ENCODE measurements at regions of chr1 and their contacts with region 1.

Region 1: DNA sequence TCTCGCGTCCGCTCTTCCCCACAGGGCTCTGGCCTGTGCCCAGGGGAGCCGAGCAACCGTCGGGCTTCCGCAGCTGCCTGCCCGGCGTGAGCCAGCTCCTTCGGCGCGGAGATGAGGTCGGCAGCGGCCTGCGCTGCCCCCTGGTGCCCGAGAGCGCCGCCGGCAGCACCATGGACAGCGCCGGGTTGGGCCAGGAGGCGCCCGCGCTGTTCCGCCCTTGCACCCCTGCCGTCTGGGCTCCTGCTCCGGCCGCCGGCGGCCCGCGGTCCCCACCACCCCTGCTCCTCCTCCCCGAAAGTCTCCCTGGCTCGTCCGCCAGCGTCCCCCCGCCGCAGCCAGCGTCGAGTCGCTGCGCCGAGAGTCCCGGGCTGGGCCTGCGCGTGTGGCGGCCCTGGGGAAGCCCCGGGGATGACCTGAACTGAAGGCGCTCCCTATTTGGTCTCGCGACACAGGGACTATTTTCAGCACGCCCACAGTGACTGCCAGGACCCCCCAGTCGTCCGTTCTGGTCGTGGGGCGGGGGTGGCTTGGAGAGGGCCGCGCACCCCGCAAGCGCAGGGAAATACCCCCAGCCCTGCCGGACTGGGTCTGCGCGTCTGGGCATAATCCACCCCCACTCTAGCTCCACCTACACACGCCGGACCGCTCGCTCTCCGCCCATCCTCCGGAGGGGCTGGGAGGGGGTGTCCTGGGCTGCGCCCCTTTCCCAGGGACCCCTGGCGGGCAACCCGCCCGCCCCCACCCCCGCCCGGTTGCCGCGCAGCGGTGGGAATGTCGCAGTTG is 1.3 kb downstream of the HES3 start:
- DNase-seq: peak in 38 of 42 donors; percentile 26 to 86 (median 67)

Region 2: GRCh38 chr1:6052543-6053205 is 192.6 kb before region 1 on chr1:
- intact Hi-C with region 1: loop called (anchors 5 kb)
- DNase-seq: peak in 31 of 42 donors; percentile 32 to 85 (median 59)

Region 3: GRCh38 chr1:6116137-6116536 is 129.1 kb before region 1 on chr1:
- intact Hi-C with region 1: no loop called
- DNase-seq: no peak

Region 4: DNA sequence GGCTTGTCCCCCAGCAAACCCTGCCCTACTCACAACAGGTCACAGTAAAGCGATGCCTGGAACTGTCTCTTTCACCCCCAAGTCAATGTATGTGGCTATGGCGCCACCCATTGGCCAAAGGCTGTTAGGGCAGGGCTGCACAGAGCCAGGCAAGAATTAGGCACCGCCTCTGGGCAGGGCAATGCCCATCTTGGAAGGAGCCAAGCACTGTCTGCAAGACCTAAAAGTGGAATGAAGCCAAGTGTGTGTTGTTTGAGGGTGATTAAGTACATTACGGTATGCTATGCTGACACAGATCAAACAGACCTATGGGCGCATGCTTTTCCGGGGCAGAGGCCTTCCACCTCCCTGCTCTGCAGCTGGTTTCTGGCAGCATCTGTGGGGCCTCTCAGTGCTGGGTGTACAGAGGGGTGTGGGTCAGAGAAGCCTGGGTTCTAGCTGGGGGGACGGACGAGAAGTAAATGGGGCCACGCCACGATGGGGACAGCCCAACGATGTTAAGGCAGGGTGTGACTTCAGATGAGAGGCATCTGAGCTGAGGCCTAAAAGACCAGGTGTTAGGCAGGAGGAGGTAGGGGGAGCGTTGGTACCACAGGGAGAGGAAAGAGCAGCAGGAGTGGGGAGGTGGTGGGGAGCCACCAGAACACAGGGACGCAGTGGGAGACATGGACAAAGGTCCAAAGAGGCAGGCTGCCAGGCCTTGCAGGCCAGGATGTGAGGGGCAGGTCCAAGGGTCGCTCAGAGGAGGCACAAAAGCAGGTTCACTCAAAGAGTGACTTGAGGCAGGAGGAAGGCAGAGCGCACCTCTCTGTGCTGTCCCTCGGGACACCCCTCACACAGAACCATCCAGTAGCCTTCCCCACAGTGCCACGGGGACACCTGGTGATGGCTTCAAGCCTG is 98.5 kb after region 1 on chr1:
- intact Hi-C with region 1: loop called (anchors 5 kb)
- DNase-seq: peak; percentile 28 to 81 (median 64)

Region 5: DNA sequence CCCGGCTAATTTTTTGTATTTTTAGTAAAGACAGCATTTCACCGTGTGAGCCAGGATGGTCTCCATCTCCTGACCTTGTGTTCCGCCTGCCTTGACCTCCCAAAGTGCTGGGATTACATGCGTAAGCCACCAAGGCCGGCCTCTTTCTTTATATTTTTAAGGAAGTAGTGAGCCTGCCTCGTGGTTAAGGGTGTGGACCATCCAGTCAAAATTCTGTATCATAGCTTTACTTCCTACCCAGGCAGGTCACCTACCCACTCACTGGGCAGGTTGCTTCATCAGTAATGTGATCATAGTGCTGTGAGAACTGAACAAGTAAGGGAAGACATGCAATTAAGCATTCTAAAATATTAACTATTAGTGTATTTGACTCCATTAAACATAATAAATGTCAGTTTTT is 156.4 kb after region 1 on chr1:
- intact Hi-C with region 1: loop called (anchors 5 kb)
- DNase-seq: no peak